ENCODE measurements at regions of chr6 and their contacts with region 1.

Region 1: GRCh38 chr6:152874846-152875568 is 107.8 kb downstream of the FBXO5 start:
- DNase-seq: peak; percentile 59 to 86 (median 69)
- ATAC-seq: peak; percentile 95
- H3K4me3 ChIP-seq: peak overlapping the region; percentile 54
- H3K27ac ChIP-seq: peak overlapping the region; percentile 91
- H3K4me1 ChIP-seq: peaks cover 3 to 9% of the 10 kb centered on the region in 2 experiments; a peak in 3 of 5 replicates
- H3K27me3 ChIP-seq: no peaks in the 10 kb centered on the region
- CTCF ChIP-seq: peak; percentile 48 to 68 (median 65); a peak in 5 of 6 replicates
- EP300 ChIP-seq: peak; percentile 25; the same call in 1 of the 2 replicates
- POLR2A ChIP-seq: no peak
- RAD21 ChIP-seq: no peak

Region 2: DNA sequence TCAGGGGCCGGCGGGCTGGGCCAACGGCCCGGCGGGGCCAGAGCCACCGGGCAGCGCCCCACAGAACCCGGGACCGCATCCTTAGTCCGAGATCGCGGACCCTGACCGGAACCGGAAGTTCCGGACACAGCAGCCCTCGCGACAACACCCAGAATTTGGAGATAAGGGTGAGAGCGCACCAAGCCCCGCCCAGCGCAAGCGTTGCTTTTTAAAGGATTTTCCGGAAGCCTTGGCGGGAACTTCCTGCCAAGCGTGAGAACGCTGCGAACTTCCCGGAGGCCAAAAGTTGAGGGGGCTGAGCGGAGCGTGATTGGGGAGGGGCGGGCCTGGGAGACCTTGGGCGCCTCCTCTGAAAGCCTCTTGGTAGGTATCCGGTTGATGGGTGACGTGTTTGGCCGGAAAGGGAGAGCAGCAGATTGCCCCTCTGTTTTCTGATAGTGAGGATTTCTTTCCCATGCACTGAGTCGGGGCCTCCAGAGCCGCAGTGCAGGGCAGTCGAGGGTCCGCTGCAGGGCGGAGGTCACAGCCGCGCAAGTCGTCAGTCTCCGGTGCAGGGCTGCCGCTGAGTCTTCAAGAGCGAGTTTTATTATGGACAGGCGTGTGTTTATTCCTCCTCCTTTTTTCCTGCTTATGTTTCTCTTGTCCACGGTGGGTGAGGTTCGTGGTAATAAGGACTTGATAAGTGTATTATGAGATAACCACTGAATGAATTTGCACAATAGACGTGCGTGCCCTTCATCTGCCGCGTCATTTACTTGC is 127.8 kb after region 1 on chr6 and contains the start of gene MTRF1L:
- CTCF ChIA-PET with region 1: no interaction called
- POLR2A ChIA-PET with region 1: no interaction called
- in situ Hi-C with region 1: no loop called
- intact Hi-C with region 1: loop called (anchors 2 kb)
- DNase-seq: peak; percentile 94 to 100 (median 95)
- ATAC-seq: peak; percentile 92
- H3K4me3 ChIP-seq: peak within 1 kb of the TSS; percentile 89
- H3K27ac ChIP-seq: peak within 1 kb of the TSS; percentile 88
- H3K4me1 ChIP-seq: peaks cover 0 to 3% of the 10 kb centered on the region in 2 experiments; a peak in 2 of 5 replicates
- H3K27me3 ChIP-seq: no peaks in the 10 kb centered on the region; a peak in 1 of 5 replicates
- CTCF ChIP-seq: 0 out of 6 replicates have a peak, but pooled peaks of 1 of the 3 experiments have one; percentile 2
- EP300 ChIP-seq: no peak
- POLR2A ChIP-seq: peak; percentile 89
- RAD21 ChIP-seq: no peak
- polyA plus RNA-seq, gene MTRF1L: 10.7 to 13.7 TPM